Activated CD4-positive, alpha-beta memory T cell treated with anti-CD3 and anti-CD28 coated beads, Interleukin-2, amount 10 ng/mL, durations not matched to agents 7 days and 5 days (primary cell): ENCODE measurements at regions of chr11 and their contacts with region 1.

Region 1: DNA sequence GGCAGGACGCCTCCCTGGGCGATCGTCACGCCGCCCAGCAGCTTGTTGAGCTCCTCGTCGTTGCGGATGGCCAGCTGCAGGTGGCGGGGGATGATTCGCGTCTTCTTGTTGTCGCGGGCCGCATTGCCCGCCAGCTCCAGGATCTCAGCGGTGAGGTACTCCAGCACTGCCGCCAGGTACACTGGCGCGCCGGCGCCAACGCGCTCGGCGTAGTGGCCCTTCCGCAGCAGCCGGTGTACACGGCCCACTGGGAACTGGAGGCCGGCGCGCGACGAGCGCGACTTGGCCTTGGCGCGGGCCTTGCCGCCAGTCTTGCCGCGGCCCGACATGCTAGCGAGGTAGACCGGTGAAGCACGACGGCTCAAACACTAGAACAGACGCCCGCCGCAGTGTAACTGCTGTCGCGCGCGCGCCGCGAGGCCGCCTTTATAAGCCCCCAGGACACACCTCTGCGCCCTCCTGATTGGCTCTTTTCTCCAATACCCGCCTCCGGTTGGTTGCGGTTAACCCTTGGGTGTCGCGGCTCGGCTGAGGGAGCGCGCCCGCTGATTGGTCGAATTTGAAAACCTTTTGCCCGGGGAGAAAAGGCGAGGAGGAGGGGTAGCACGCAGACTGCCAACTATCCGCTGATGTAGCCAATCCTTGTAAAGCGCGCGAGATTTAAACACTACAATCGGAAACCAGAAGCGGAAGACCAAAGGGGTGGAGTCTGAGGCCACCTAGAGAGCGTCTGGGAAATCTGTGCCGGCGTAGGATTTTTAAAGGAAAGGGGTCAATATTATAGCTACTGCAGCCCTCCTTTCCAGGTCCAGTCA is 6.4 kb downstream of the DPAGT1 start:
- DNase-seq: peak; percentile 100
- H3K4me3 Mint-ChIP-seq: peak overlapping the region; percentile 93
- H3K27ac Mint-ChIP-seq: peak overlapping the region; percentile 86
- H3K4me1 Mint-ChIP-seq: peaks cover 70% of the 10 kb centered on the region
- H3K27me3 Mint-ChIP-seq: no peaks in the 10 kb centered on the region

Region 2: DNA sequence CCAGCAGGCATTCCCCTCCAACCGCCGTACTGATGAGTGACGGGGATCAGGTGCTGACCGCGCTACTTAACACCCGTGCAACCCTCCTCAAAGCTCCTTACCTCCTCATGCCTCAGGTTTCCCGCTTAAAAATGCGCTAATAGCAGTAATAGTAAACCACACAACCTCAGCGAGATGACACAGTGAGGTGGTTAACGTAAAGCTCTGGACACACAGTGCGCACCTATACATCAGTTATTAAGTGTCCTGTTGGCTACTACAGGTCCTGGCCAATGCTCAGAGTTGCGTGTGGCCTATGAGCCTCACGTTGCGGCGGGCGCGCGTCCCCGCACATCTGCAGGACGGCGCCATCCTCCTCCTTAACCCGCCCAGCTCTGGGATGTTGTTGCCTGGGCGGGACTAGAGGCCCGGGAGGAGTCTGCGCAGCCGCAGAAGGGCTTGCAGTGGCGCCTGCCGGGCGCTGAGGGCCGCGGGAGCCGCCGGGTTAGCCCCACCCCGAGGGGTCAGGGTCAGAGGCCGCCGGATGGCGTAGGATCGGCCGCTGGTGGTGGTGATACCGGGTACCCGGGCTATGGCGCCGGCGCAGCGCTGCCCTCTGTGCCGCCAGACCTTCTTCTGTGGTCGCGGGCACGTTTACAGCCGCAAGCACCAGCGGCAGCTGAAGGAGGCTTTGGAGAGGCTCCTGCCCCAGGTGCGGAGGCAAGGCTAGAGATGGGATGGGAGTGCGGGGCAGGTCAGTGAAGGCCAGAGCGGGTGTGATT is 97.5 kb before region 1 on chr11 and contains the start of gene CENATAC:
- CTCF ChIA-PET with region 1: no interaction called
- POLR2A ChIA-PET with region 1: interaction called, 26 read pairs
- DNase-seq: peak; percentile 98
- H3K4me3 Mint-ChIP-seq: peak within 1 kb of the TSS; percentile 99
- H3K27ac Mint-ChIP-seq: peak within 1 kb of the TSS; percentile 95
- H3K4me1 Mint-ChIP-seq: peaks cover 36% of the 10 kb centered on the region
- H3K27me3 Mint-ChIP-seq: no peaks in the 10 kb centered on the region
- total RNA-seq, gene CENATAC: 34.6 to 35.0 TPM

Region 3: DNA sequence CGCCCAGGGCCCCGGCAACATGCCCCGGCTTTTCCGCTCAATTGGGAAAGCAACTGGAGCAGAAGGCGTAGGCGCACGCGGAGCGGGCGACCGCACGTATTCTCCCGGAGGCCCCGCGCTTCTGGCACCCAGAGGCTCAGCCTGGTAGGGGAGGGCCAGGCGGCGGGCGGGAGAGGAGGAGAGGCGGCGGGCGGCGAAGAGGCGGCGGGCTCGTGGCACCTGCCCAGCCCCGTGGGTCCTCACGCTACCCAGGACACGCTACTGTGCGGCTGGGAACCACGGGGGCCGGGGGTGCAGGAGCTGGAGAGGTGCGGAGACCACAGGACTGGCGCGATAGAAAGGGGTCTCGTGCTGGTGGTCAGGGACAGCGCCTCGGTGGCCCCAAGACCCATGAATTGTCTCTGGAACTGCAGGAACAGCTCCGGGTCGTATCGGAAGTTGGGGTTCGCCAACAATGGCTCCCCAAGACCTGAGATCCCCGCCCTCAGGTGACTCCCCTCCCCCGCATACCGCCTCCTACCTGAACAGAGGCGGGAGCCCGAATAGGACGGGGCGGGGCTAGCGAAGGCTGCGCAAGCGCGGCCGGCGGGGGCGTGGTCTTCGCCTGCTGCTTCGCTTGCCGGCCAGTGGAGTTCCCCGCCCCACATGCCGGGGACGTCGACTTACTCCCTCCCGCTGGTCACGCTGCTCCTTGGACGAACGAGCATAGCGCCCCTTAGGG is 64.8 kb before region 1 on chr11 and contains the start of gene SLC37A4:
- CTCF ChIA-PET with region 1: no interaction called
- POLR2A ChIA-PET with region 1: interaction called, 10 read pairs
- DNase-seq: peak; percentile 98
- H3K4me3 Mint-ChIP-seq: peak within 1 kb of the TSS; percentile 77
- H3K27ac Mint-ChIP-seq: peak within 1 kb of the TSS; percentile 78
- H3K4me1 Mint-ChIP-seq: peaks cover 29% of the 10 kb centered on the region
- H3K27me3 Mint-ChIP-seq: no peaks in the 10 kb centered on the region
- total RNA-seq, gene SLC37A4: 31.6 to 33.9 TPM

Region 4: DNA sequence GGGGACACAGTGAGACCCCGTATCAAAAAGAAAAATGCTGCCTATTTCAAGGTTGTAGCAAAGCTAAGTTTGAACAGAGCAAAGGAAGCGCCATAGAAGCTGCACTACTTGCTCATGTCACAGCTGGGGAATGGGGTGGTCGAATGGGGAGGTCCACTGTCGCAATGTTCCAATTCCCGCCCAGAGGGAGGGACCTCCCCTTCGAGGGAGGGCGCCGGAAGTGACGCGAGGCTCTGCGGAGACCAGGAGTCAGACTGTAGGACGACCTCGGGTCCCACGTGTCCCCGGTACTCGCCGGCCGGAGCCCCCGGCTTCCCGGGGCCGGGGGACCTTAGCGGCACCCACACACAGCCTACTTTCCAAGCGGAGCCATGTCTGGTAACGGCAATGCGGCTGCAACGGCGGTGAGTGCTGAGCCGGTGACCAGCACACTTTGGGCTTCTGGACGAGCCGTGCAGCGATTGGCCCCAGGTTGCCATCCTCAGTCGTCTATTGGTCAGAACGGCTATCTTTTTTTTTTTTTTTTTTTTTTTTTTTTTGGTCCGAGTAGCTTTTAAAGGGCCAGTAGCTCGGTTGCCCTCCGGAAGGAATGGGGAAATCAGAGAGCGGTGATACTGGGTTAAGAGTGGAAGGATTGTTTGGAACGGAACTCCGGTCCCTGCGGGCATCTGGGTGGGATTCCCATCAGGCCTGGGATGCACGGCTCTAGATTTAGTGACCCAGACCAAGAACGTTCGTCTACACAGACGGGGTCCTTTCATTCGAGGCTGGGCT is 10.4 kb before region 1 on chr11 and contains the start of gene HMBS:
- CTCF ChIA-PET with region 1: interaction called, 20 read pairs
- POLR2A ChIA-PET with region 1: interaction called, 121 read pairs
- DNase-seq: peak; percentile 89
- H3K4me3 Mint-ChIP-seq: peak within 1 kb of the TSS; percentile 98
- H3K27ac Mint-ChIP-seq: peak within 1 kb of the TSS; percentile 91
- H3K4me1 Mint-ChIP-seq: peaks cover 47% of the 10 kb centered on the region
- H3K27me3 Mint-ChIP-seq: no peaks in the 10 kb centered on the region
- total RNA-seq, gene HMBS: 17.3 to 18.8 TPM

Region 5: GRCh38 chr11:119168471-119169281 is 73.4 kb after region 1 on chr11 and contains the start of gene NLRX1:
- CTCF ChIA-PET with region 1: interaction called, 4 read pairs
- POLR2A ChIA-PET with region 1: interaction called, 10 read pairs
- DNase-seq: peak; percentile 89
- H3K4me3 Mint-ChIP-seq: peak within 1 kb of the TSS; percentile 89
- H3K27ac Mint-ChIP-seq: peak within 1 kb of the TSS; percentile 89
- H3K4me1 Mint-ChIP-seq: peaks cover 23% of the 10 kb centered on the region
- H3K27me3 Mint-ChIP-seq: no peaks in the 10 kb centered on the region
- total RNA-seq, gene NLRX1: 19.2 to 21.9 TPM

Region 6: GRCh38 chr11:119181677-119182412 is 86.6 kb after region 1 on chr11:
- CTCF ChIA-PET with region 1: no interaction called
- POLR2A ChIA-PET with region 1: no interaction called
- DNase-seq: no peak
- H3K4me3 Mint-ChIP-seq: no peak overlapping the region
- H3K27ac Mint-ChIP-seq: no peak overlapping the region
- H3K4me1 Mint-ChIP-seq: peaks cover 14% of the 10 kb centered on the region
- H3K27me3 Mint-ChIP-seq: no peaks in the 10 kb centered on the region